ENCODE measurements at regions of chr19 and their contacts with region 1.

Region 1: DNA sequence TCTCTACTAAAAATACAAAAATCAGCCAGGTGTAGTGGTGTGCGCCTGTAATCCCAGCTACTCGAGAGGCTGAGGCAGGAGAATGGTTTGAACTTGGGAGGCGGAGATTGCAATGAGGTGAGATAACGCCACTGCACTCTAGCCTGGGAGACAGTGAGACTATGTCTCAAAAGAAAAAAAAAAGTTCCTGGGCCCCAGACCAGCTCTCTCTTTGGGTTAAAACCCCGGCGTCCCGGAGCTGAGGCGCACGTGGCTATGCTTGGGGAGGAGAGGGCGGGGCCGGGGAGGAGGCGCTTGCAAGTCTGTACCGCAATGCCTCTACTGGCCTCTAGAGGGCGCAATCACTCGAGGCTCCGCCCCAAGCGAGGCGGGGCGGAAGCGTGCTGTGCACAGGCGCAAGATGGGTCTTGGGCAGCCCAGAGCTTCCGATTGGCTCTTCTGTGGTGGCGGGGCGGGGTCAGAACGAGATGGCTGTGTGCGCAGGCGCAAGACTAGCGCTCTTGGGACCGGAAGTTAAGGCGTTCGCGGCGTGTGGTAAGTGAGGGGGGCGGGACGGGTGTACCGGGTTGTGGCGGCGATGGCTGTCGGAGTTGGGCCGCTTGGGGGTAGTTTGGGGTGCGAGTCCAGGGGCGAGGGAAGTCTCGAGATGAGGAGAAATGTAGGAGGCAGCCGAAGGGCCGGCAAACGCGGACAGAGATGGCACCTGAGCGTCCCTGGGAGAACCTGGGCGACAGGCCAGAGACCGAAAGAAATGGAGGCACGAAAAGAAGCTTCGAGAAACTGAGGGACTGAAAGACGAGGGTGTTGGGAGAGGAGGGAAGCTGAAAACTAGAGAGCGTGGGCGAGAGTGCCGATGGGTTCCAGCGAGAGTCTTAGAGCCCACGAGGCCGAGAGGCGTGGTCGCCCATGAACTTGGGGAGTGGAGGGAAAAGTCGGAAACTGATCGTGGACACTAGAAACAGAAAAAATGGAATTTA is at the start of gene DHX34:
- DNase-seq: peak; percentile 99
- H3K4me3 Mint-ChIP-seq: peak within 1 kb of the TSS; percentile 87
- H3K27ac Mint-ChIP-seq: peak within 1 kb of the TSS; percentile 84
- H3K4me1 Mint-ChIP-seq: peaks cover 31% of the 10 kb centered on the region
- H3K27me3 Mint-ChIP-seq: no peaks in the 10 kb centered on the region
- total RNA-seq, gene DHX34: 13.0 TPM

Region 2: DNA sequence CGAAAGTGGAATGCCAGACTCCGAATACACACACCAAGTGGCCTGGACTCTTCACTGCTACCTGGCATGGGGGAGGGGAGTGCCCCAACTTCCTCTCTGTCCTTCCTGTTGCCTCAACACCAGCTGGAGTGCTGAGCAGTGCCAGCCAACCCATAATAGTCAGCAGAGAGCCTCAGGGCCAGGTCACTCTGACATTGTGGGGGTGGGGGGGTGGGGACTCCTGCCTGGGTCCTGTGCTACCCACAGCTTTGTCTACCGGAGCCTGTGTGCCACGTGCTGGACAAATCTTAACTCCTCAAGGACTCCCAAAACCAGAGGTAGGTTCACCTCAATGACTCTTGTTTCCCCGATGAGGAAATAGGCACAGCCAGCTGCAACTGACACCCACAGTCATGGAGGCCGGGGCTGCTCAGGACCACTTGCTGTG is 12.2 kb before region 1 on chr19:
- CTCF ChIA-PET with region 1: interaction called, 21 read pairs
- POLR2A ChIA-PET with region 1: no interaction called
- DNase-seq: peak; percentile 19
- H3K4me3 Mint-ChIP-seq: no peak overlapping the region
- H3K27ac Mint-ChIP-seq: peak overlapping the region; percentile 77
- H3K4me1 Mint-ChIP-seq: peaks cover 12% of the 10 kb centered on the region
- H3K27me3 Mint-ChIP-seq: no peaks in the 10 kb centered on the region

Region 3: GRCh38 chr19:47370045-47370611 is 21.0 kb after region 1 on chr19:
- CTCF ChIA-PET with region 1: interaction called, 10 read pairs
- POLR2A ChIA-PET with region 1: no interaction called
- DNase-seq: no peak
- H3K4me3 Mint-ChIP-seq: no peak overlapping the region
- H3K27ac Mint-ChIP-seq: no peak overlapping the region
- H3K4me1 Mint-ChIP-seq: no peaks in the 10 kb centered on the region
- H3K27me3 Mint-ChIP-seq: no peaks in the 10 kb centered on the region

Region 4: GRCh38 chr19:47391510-47392223 is 42.6 kb after region 1 on chr19:
- CTCF ChIA-PET with region 1: interaction called, 10 read pairs
- POLR2A ChIA-PET with region 1: no interaction called
- DNase-seq: peak; percentile 89
- H3K4me3 Mint-ChIP-seq: no peak overlapping the region
- H3K27ac Mint-ChIP-seq: no peak overlapping the region
- H3K4me1 Mint-ChIP-seq: peaks cover 7% of the 10 kb centered on the region
- H3K27me3 Mint-ChIP-seq: peaks cover 18% of the 10 kb centered on the region